CD8-positive, alpha-beta T cell (primary cell): ENCODE measurements at regions of chr12 and their contacts with region 1.

Region 1: GRCh38 chr12:59595883-59596540 is at the start of gene SLC16A7:
- DNase-seq: peak; percentile 62 to 92 (median 85)
- ATAC-seq: peak; percentile 32
- H3K4me3 ChIP-seq: peak within 1 kb of the TSS; percentile 81 to 95
- H3K4me3 Mint-ChIP-seq: peak within 1 kb of the TSS; percentile 90
- H3K27ac ChIP-seq: peak within 1 kb of the TSS; percentile 93 to 94
- H3K27ac Mint-ChIP-seq: peak within 1 kb of the TSS; percentile 98
- H3K4me1 ChIP-seq: peaks cover 43% of the 10 kb centered on the region
- H3K4me1 Mint-ChIP-seq: peaks cover 57% of the 10 kb centered on the region
- H3K27me3 ChIP-seq: no peaks in the 10 kb centered on the region
- H3K27me3 Mint-ChIP-seq: no peaks in the 10 kb centered on the region
- CTCF ChIP-seq: no peak
- total RNA-seq, gene SLC16A7: 14.2 to 16.9 TPM

Region 2: DNA sequence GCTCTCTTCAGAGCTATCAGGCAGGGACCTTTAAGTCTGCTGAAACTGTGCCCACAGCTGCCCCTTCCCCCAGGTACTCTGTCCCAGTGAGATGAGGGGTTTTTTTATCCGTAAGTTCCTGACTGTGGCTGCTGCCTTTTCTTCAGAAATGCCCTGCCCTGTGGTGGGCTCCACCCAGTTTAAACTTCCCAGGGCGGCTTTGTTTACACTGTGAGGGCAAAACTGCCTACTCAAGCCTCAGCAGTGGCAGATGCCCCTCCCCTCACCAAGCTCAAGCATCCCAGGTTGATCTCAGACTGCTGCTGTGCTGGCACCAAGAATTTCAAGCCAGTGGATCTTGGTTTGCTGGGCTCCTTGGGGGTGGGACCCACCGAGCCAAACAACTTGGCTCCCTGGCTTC is 47.1 kb before region 1 on chr12:
- CTCF ChIA-PET with region 1: interaction called, 3 read pairs
- POLR2A ChIA-PET with region 1: interaction called, 3 read pairs
- intact Hi-C with region 1: loop called in 1 of 2 experiments (anchors 5 kb)
- DNase-seq: peak in 3 of 9 experiments; percentile 2 to 23 (median 19)
- ATAC-seq: peak; percentile 34
- H3K4me3 ChIP-seq: no peak overlapping the region
- H3K4me3 Mint-ChIP-seq: no peak overlapping the region
- H3K27ac ChIP-seq: no peak overlapping the region
- H3K27ac Mint-ChIP-seq: no peak overlapping the region
- H3K4me1 ChIP-seq: no peaks in the 10 kb centered on the region
- H3K4me1 Mint-ChIP-seq: peaks cover 27% of the 10 kb centered on the region
- H3K27me3 ChIP-seq: no peaks in the 10 kb centered on the region
- H3K27me3 Mint-ChIP-seq: no peaks in the 10 kb centered on the region
- CTCF ChIP-seq: no peak

Region 3: DNA sequence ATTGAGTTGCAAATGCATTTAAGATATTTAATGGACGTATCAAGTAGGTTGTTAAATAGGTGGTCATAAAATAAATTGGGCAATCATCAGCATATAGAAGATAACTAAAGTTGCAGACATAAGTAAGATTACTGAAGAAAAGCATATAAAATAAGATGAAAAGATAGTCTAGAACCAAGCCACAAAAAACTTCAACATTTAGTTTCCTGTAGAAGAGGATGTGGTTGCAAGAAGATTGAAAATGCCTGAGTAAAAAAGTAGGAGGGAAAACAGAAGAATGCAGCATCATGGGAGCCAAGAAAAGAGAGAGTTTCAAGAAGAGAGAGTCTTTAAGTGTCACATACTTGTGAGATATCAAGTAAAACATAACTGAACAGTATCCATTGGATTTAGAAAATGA is 17.8 kb before region 1 on chr12:
- CTCF ChIA-PET with region 1: no interaction called
- POLR2A ChIA-PET with region 1: interaction called, 5 read pairs
- intact Hi-C with region 1: loop called in 1 of 2 experiments (anchors 1 kb)
- DNase-seq: peak in 1 of 9 experiments; percentile 27
- ATAC-seq: peak; percentile 57
- H3K4me3 ChIP-seq: no peak overlapping the region
- H3K4me3 Mint-ChIP-seq: peak overlapping the region; percentile 1
- H3K27ac ChIP-seq: no peak overlapping the region
- H3K27ac Mint-ChIP-seq: peak overlapping the region; percentile 3
- H3K4me1 ChIP-seq: peaks cover 28% of the 10 kb centered on the region
- H3K4me1 Mint-ChIP-seq: peaks cover 43% of the 10 kb centered on the region
- H3K27me3 ChIP-seq: no peaks in the 10 kb centered on the region
- H3K27me3 Mint-ChIP-seq: no peaks in the 10 kb centered on the region
- CTCF ChIP-seq: no peak

Region 4: DNA sequence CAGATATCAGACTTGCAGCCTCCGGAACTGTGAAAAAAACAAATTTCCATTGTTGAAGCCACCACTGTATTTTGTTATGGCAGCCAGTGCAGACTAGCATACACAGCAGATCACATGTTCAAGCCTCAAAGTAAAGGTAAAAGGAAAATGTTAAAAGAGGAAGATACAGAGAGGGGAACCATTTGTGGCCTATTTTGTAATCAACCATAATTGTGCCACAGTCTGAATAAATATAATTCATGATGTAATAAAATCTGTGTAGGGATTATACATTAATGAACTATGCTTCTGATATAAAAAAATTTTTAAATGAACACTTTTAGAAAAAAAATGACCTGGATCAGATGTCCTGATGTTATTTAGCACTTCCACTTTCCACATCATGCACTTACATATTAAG is 79.4 kb after region 1 on chr12:
- CTCF ChIA-PET with region 1: no interaction called
- POLR2A ChIA-PET with region 1: no interaction called
- intact Hi-C with region 1: no loop called
- DNase-seq: no peak
- ATAC-seq: no peak
- H3K4me3 ChIP-seq: no peak overlapping the region
- H3K4me3 Mint-ChIP-seq: no peak overlapping the region
- H3K27ac ChIP-seq: no peak overlapping the region
- H3K27ac Mint-ChIP-seq: no peak overlapping the region
- H3K4me1 ChIP-seq: no peaks in the 10 kb centered on the region
- H3K4me1 Mint-ChIP-seq: peaks cover 40% of the 10 kb centered on the region
- H3K27me3 ChIP-seq: no peaks in the 10 kb centered on the region
- H3K27me3 Mint-ChIP-seq: no peaks in the 10 kb centered on the region
- CTCF ChIP-seq: no peak

Region 5: GRCh38 chr12:59699421-59700152 is 103.6 kb after region 1 on chr12:
- CTCF ChIA-PET with region 1: no interaction called
- POLR2A ChIA-PET with region 1: no interaction called
- intact Hi-C with region 1: loop called in 1 of 2 experiments (anchors 10 kb)
- DNase-seq: peak in 1 of 9 experiments; percentile 20
- ATAC-seq: no peak
- H3K4me3 ChIP-seq: no peak overlapping the region
- H3K4me3 Mint-ChIP-seq: no peak overlapping the region
- H3K27ac ChIP-seq: no peak overlapping the region
- H3K27ac Mint-ChIP-seq: no peak overlapping the region
- H3K4me1 ChIP-seq: no peaks in the 10 kb centered on the region
- H3K4me1 Mint-ChIP-seq: peaks cover 31% of the 10 kb centered on the region
- H3K27me3 ChIP-seq: no peaks in the 10 kb centered on the region
- H3K27me3 Mint-ChIP-seq: no peaks in the 10 kb centered on the region
- CTCF ChIP-seq: no peak

Region 6: DNA sequence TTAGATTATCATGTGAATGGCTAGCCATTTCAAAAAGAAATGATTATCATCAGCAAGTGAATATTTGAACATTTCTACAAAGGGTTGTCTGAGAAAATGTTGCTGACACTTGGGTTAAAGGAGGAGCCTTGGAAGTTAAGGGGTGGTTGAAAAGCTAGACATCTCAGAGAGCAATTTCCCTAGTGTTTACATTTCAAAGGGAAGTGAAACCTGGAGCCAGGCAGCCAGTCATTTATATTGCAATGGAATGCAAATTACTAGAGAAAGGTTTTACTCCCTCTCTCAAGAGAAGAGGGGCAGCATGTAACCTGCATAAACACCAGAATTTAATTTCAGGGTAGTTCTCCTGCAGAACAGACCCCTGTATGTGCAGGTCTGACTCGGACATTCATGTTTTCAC is 278.8 kb after region 1 on chr12:
- CTCF ChIA-PET with region 1: no interaction called
- POLR2A ChIA-PET with region 1: no interaction called
- intact Hi-C with region 1: no loop called
- DNase-seq: no peak
- ATAC-seq: no peak
- H3K4me3 ChIP-seq: no peak overlapping the region
- H3K4me3 Mint-ChIP-seq: no peak overlapping the region
- H3K27ac ChIP-seq: no peak overlapping the region
- H3K27ac Mint-ChIP-seq: no peak overlapping the region
- H3K4me1 ChIP-seq: no peaks in the 10 kb centered on the region
- H3K4me1 Mint-ChIP-seq: no peaks in the 10 kb centered on the region
- H3K27me3 ChIP-seq: no peaks in the 10 kb centered on the region
- H3K27me3 Mint-ChIP-seq: no peaks in the 10 kb centered on the region
- CTCF ChIP-seq: no peak